CD4-positive, alpha-beta T cell (primary cell): ENCODE measurements at regions of chr17 and their contacts with region 1.

Region 1: GRCh38 chr17:2711601-2712299 is at the start of gene CLUH:
- DNase-seq: peak; percentile 88 to 98 (median 94)
- ATAC-seq: peak; percentile 92
- H3K4me3 ChIP-seq: peak within 1 kb of the TSS; percentile 71
- H3K4me3 Mint-ChIP-seq: peak within 1 kb of the TSS; percentile 92
- H3K27ac ChIP-seq: peak within 1 kb of the TSS in 1 of 2 donors; percentile 30
- H3K27ac Mint-ChIP-seq: peak within 1 kb of the TSS; percentile 84
- H3K4me1 ChIP-seq: peaks cover 53% of the 10 kb centered on the region
- H3K4me1 Mint-ChIP-seq: peaks cover 28% of the 10 kb centered on the region
- H3K27me3 ChIP-seq: no peaks in the 10 kb centered on the region
- H3K27me3 Mint-ChIP-seq: no peaks in the 10 kb centered on the region
- CTCF ChIP-seq: no peak
- total RNA-seq, gene CLUH: 34.4 to 34.8 TPM

Region 2: DNA sequence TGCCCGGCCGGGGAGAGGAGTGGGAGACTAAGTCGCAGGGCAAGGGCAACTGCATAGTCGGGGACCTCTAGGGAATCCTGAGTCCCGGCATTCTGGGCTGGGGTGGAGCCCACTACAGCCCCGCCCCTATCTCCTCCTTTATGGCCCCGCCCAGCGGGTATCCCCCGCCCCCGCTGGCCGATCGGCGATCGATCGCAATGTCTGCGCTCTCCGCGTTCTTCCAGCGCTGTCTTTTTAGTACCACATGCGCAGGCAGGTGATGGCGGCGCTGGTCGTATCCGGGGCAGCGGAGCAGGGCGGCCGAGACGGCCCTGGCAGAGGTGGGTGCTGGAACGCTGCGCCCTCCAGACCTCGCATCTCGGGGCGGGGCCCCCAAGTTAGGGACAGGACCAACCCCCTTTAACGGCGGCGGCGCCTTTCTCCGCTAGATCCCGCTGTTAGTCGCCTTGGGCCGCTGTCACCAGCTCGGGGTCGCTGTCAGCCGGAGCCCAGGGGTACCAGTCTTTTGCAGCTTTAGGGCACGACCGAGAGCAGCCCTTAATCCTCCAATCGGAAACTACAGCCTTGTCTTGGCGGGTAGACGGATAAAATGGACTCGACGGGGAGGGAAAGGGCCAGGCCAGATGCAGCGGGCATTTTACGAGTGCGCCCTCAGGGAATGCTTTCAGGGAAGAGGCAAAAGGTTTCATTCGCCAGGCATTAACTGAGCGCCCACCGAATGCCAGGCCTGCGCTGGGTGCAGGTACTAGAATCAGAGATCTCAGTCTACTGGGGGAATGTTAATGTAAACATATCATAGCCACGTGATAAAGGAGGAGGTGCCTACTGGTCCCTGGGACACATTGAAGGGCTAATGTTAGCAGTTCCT is 681.6 kb before region 1 on chr17 and contains the start of gene DPH1:
- CTCF ChIA-PET with region 1: no interaction called
- POLR2A ChIA-PET with region 1: no interaction called
- intact Hi-C with region 1: loop called in 1 of 2 experiments (anchors 5 kb)
- DNase-seq: peak; percentile 74 to 92 (median 81)
- ATAC-seq: peak; percentile 82
- H3K4me3 ChIP-seq: peak within 1 kb of the TSS; percentile 100
- H3K4me3 Mint-ChIP-seq: peak within 1 kb of the TSS; percentile 94
- H3K27ac ChIP-seq: peak within 1 kb of the TSS; percentile 60 to 70
- H3K27ac Mint-ChIP-seq: peak within 1 kb of the TSS; percentile 86
- H3K4me1 ChIP-seq: peaks cover 45% of the 10 kb centered on the region
- H3K4me1 Mint-ChIP-seq: peaks cover 34% of the 10 kb centered on the region
- H3K27me3 ChIP-seq: peaks cover 12 to 16% of the 10 kb centered on the region in 2 experiments
- H3K27me3 Mint-ChIP-seq: peaks cover 26% of the 10 kb centered on the region
- CTCF ChIP-seq: no peak
- total RNA-seq, gene DPH1: 96.4 to 101 TPM

Region 3: GRCh38 chr17:2401426-2402221 is 310.1 kb before region 1 on chr17:
- CTCF ChIA-PET with region 1: no interaction called
- POLR2A ChIA-PET with region 1: no interaction called
- intact Hi-C with region 1: loop called in 1 of 2 experiments (anchors 5 kb)
- DNase-seq: peak; percentile 97 to 99 (median 99)
- ATAC-seq: peak; percentile 58
- H3K4me3 ChIP-seq: peak overlapping the region; percentile 93
- H3K4me3 Mint-ChIP-seq: peak overlapping the region; percentile 100
- H3K27ac ChIP-seq: peak overlapping the region; percentile 93 to 100
- H3K27ac Mint-ChIP-seq: peak overlapping the region; percentile 99
- H3K4me1 ChIP-seq: peaks cover 51% of the 10 kb centered on the region
- H3K4me1 Mint-ChIP-seq: peaks cover 47% of the 10 kb centered on the region
- H3K27me3 ChIP-seq: no peaks in the 10 kb centered on the region
- H3K27me3 Mint-ChIP-seq: no peaks in the 10 kb centered on the region
- CTCF ChIP-seq: no peak

Region 4: GRCh38 chr17:2511462-2512369 is 200.0 kb before region 1 on chr17 and contains the start of gene METTL16:
- CTCF ChIA-PET with region 1: no interaction called
- POLR2A ChIA-PET with region 1: no interaction called
- intact Hi-C with region 1: loop called in 1 of 2 experiments (anchors 2 kb)
- DNase-seq: peak; percentile 91 to 99 (median 96)
- ATAC-seq: peak; percentile 98
- H3K4me3 ChIP-seq: peak within 1 kb of the TSS; percentile 70
- H3K4me3 Mint-ChIP-seq: no peak within 1 kb of the TSS
- H3K27ac ChIP-seq: peak within 1 kb of the TSS; percentile 92 to 96
- H3K27ac Mint-ChIP-seq: no peak within 1 kb of the TSS
- H3K4me1 ChIP-seq: peaks cover 34% of the 10 kb centered on the region
- H3K4me1 Mint-ChIP-seq: peaks cover 12% of the 10 kb centered on the region
- H3K27me3 ChIP-seq: no peaks in the 10 kb centered on the region
- H3K27me3 Mint-ChIP-seq: no peaks in the 10 kb centered on the region
- CTCF ChIP-seq: no peak
- total RNA-seq, gene METTL16: 55.7 to 58.0 TPM

Region 5: GRCh38 chr17:2672026-2672425 is 39.7 kb before region 1 on chr17:
- CTCF ChIA-PET with region 1: no interaction called
- POLR2A ChIA-PET with region 1: no interaction called
- intact Hi-C with region 1: no loop called
- DNase-seq: no peak
- ATAC-seq: no peak
- H3K4me3 ChIP-seq: no peak overlapping the region
- H3K4me3 Mint-ChIP-seq: no peak overlapping the region
- H3K27ac ChIP-seq: no peak overlapping the region
- H3K27ac Mint-ChIP-seq: no peak overlapping the region
- H3K4me1 ChIP-seq: no peaks in the 10 kb centered on the region
- H3K4me1 Mint-ChIP-seq: peaks cover 10% of the 10 kb centered on the region
- H3K27me3 ChIP-seq: no peaks in the 10 kb centered on the region
- H3K27me3 Mint-ChIP-seq: no peaks in the 10 kb centered on the region
- CTCF ChIP-seq: no peak

Region 6: GRCh38 chr17:2749784-2750181 is 38.0 kb after region 1 on chr17:
- CTCF ChIA-PET with region 1: no interaction called
- POLR2A ChIA-PET with region 1: no interaction called
- intact Hi-C with region 1: loop called in 1 of 2 experiments (anchors 5 kb)
- DNase-seq: peak; percentile 46 to 88 (median 65)
- ATAC-seq: peak; percentile 98
- H3K4me3 ChIP-seq: no peak overlapping the region
- H3K4me3 Mint-ChIP-seq: no peak overlapping the region
- H3K27ac ChIP-seq: no peak overlapping the region
- H3K27ac Mint-ChIP-seq: no peak overlapping the region
- H3K4me1 ChIP-seq: peaks cover 5% of the 10 kb centered on the region
- H3K4me1 Mint-ChIP-seq: no peaks in the 10 kb centered on the region
- H3K27me3 ChIP-seq: peaks cover 37 to 39% of the 10 kb centered on the region in 2 experiments
- H3K27me3 Mint-ChIP-seq: peaks cover 73% of the 10 kb centered on the region
- CTCF ChIP-seq: no peak

Region 7: DNA sequence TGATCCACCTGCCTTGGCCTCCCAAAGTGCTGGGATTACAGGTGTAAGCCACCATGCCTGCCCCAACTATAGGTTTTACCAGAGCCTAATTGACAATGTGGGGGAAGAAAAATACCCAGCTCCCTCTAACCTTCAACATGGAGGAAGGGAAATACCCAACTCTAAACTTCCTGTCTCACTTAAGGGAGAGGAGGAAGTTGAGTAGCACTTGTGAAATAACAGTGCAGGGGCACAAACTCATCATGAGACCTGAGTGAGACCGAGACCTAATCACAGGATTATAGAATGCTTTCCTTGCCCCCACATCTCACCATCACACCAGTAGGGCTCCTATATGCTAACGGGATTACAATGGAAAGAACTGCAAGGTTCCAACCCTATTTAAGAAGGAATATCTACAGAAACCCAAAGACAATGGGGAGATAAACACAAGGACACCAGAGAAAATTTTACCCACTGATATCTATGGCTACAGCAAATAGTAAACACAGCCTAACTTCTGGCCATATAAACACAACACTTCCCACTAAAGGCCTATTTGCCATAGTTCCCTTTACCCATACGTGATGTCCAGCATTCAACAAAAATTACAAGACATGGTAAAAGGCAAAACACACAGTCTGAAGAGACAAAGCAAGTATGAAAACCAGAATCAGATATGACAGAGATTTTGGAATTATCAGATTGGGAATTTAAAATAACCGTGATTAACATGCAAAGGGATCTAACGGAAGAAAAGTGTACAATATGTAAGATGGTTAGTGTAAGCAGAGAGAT is 559.5 kb after region 1 on chr17:
- CTCF ChIA-PET with region 1: no interaction called
- POLR2A ChIA-PET with region 1: no interaction called
- intact Hi-C with region 1: no loop called
- DNase-seq: peak in 2 of 14 experiments; percentile 16 to 27
- ATAC-seq: no peak
- H3K4me3 ChIP-seq: no peak overlapping the region
- H3K4me3 Mint-ChIP-seq: no peak overlapping the region
- H3K27ac ChIP-seq: no peak overlapping the region
- H3K27ac Mint-ChIP-seq: no peak overlapping the region
- H3K4me1 ChIP-seq: no peaks in the 10 kb centered on the region
- H3K4me1 Mint-ChIP-seq: no peaks in the 10 kb centered on the region
- H3K27me3 ChIP-seq: peaks cover 0 to 2% of the 10 kb centered on the region in 2 experiments
- H3K27me3 Mint-ChIP-seq: peaks cover 22% of the 10 kb centered on the region
- CTCF ChIP-seq: no peak

Region 8: GRCh38 chr17:3636154-3636907 is 924.6 kb after region 1 on chr17 and contains the starts of genes CTNS and SHPK:
- CTCF ChIA-PET with region 1: no interaction called
- POLR2A ChIA-PET with region 1: interaction called, 3 read pairs
- intact Hi-C with region 1: loop called in 1 of 2 experiments (anchors 10 kb)
- DNase-seq: peak; percentile 86 to 96 (median 92)
- ATAC-seq: peak; percentile 98
- H3K4me3 ChIP-seq: peak within 1 kb of the TSS; percentile 80
- H3K4me3 Mint-ChIP-seq: peak within 1 kb of the TSS; percentile 98
- H3K27ac ChIP-seq: peak within 1 kb of the TSS; percentile 93 to 99
- H3K27ac Mint-ChIP-seq: peak within 1 kb of the TSS; percentile 99
- H3K4me1 ChIP-seq: peaks cover 27% of the 10 kb centered on the region
- H3K4me1 Mint-ChIP-seq: peaks cover 21% of the 10 kb centered on the region
- H3K27me3 ChIP-seq: no peaks in the 10 kb centered on the region
- H3K27me3 Mint-ChIP-seq: no peaks in the 10 kb centered on the region
- CTCF ChIP-seq: no peak
- total RNA-seq, gene CTNS: 3.3 to 4.9 TPM
- total RNA-seq, gene SHPK: 3.4 TPM